Posterior vena cava (tissue), 2 donors: ENCODE measurements at regions of chr15 and their contacts with region 1.

Region 1: GRCh38 chr15:62666046-62666445 is 376.5 kb upstream of the TPM1 start:
- DNase-seq: no peak

Region 2: DNA sequence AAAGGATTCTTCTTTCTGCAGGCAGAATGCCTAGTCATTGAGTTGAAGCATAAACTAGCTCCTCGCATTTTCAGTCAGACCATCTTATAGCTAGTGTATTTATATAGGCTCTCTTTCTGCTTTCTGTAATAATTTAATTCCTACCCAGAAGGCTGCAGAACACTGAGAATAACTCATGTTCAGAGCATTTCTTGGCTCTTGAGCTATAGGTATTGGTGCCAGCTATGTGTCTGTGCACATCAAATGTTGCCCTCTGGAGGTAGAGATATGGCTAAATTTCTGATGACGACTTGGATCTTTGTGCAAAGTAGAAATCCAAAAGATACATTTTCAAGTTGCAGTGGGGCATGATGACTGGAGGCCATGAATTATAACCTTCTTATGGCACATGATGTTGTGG is 40.3 kb after region 1 on chr15:
- intact Hi-C with region 1: no loop called
- DNase-seq: no peak

Region 3: GRCh38 chr15:62739082-62739481 is 73.0 kb after region 1 on chr15:
- intact Hi-C with region 1: loop called in 1 of 2 experiments (anchors 2 kb)
- DNase-seq: no peak

Region 4: GRCh38 chr15:62841269-62841628 is 175.2 kb after region 1 on chr15:
- intact Hi-C with region 1: no loop called
- DNase-seq: no peak